Caco-2 (cell line): ENCODE measurements at regions of chr3 and their contacts with region 1.

Region 1: DNA sequence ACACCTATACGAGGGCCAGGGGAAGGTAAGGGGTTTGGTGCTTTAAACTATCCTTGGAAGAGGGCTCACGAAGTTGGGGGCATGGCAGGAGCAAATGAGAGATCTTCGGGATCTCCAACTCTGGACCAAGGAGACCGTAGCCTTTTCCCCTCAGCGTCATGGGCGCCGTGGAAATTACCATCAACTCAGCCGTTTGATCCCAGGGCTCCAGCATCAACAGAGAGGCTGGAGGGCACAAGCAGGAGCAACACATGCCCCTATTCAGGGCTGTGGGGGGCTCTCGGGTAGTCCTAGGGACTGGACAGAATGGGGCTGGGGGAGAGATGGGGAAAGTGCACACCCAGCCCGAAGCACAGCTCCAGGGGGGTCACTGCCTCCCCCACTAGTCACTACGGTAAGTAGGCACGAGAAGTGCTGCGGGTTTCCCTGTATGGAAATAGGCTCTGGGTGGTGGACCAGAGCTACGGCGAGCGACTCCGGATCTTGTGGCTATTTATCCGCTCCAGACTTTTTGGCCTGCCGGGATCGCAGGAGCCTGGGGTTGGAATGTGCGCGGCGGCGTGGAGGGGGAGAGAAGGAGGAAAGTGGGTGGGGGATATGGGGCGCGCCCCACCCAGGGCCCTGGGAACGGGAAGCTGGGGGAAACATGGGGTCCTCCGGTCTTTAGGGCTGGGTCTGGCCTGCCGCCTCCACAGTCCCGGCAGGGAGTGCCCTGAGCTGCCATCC is 539 bp upstream of the LAMB2 start:
- DNase-seq: peak; percentile 86 to 90
- H3K4me3 ChIP-seq: peak overlapping the region; percentile 66
- H3K4me3 Mint-ChIP-seq: peak overlapping the region; percentile 93
- H3K27ac Mint-ChIP-seq: peak overlapping the region; percentile 90
- H3K4me1 ChIP-seq: peaks cover 15% of the 10 kb centered on the region
- H3K4me1 Mint-ChIP-seq: peaks cover 13% of the 10 kb centered on the region
- H3K27me3 ChIP-seq: no peaks in the 10 kb centered on the region
- H3K27me3 Mint-ChIP-seq: no peaks in the 10 kb centered on the region
- CTCF ChIP-seq: no peak

Region 2: DNA sequence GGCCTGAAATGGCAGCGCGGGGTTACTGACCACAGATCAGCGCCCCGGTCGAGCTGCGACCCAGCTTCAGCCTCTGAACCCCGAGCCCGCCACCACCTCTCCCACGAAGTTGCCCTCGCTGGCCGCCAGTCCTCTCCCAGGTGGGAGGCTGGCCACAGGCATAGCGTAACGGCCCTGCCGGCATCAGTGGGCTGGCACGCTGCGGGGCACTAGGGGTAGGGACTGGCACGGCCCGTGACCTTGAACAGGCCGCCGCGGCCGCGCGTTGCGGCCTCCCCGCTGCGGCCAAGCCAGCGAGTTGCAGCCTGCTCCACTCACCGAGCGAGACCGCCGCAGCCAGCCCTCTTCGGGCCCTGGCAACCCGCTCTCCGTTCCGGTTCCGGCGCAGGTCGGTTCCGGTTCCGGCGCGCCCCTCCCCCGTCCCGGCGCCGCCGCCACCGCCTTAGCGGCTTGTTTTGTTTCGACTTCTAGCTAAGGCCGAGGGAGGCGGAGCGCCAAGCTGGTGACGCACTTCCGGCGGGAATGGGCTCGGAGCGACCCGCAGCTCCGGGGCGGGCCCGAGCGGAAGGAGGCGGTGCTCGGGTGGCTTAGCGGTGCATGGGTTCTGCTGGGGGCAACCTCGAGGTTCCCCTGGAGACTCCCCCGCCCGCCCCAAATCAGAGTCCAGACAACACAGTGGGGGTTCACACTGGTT is 12.8 kb before region 1 on chr3 and contains the start of gene USP19:
- CTCF ChIA-PET with region 1: interaction called, 8 read pairs
- POLR2A ChIA-PET with region 1: interaction called, 12 read pairs
- intact Hi-C with region 1: loop called (anchors 1 kb)
- DNase-seq: peak; percentile 89 to 91
- H3K4me3 ChIP-seq: peak within 1 kb of the TSS; percentile 90
- H3K4me3 Mint-ChIP-seq: peak within 1 kb of the TSS; percentile 79
- H3K27ac Mint-ChIP-seq: peak within 1 kb of the TSS; percentile 66
- H3K4me1 ChIP-seq: peaks cover 9% of the 10 kb centered on the region; the same call in 1 of the 2 replicates
- H3K4me1 Mint-ChIP-seq: no peaks in the 10 kb centered on the region
- H3K27me3 ChIP-seq: no peaks in the 10 kb centered on the region
- H3K27me3 Mint-ChIP-seq: no peaks in the 10 kb centered on the region
- CTCF ChIP-seq: no peak
- total RNA-seq, gene USP19: 55.9 and 56.4 TPM in 2 replicates

Region 3: DNA sequence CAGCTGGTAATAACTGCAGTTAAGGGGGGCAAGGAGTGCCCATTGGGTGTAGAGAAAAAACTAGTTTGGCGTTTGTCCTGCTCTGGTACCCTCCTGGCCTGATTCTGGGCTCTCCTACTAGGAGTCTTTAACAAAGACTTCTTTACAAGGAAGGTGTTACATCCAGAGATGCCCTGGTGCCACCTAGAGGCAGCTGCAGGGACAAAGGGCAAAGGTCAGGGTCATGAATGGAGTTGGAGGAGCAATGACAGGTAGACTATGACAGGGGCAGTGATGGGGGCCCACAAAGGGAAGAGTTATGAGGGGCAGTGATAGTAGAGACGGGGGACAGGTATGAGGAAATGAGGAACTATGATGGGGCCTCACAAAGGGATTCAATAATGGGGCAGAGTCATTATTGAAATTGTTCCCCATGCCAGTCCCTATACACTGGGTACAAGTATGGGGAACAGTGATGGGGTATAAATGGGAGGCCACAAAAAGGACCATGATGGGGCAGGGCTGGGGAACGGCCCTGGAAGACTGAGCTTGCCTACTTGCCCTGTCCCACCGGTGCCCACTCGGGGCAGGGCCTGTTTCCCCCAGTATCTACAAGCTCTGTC is 24.8 kb after region 1 on chr3:
- CTCF ChIA-PET with region 1: no interaction called
- POLR2A ChIA-PET with region 1: no interaction called
- intact Hi-C with region 1: loop called (anchors 1 kb)
- DNase-seq: peak; percentile 78 to 79
- H3K4me3 ChIP-seq: no peak overlapping the region
- H3K4me3 Mint-ChIP-seq: no peak overlapping the region
- H3K27ac Mint-ChIP-seq: peak overlapping the region; percentile 4
- H3K4me1 ChIP-seq: no peaks in the 10 kb centered on the region
- H3K4me1 Mint-ChIP-seq: no peaks in the 10 kb centered on the region
- H3K27me3 ChIP-seq: no peaks in the 10 kb centered on the region
- H3K27me3 Mint-ChIP-seq: no peaks in the 10 kb centered on the region
- CTCF ChIP-seq: peak; percentile 58 to 86

Region 4: GRCh38 chr3:49295489-49296058 is 162.2 kb after region 1 on chr3:
- CTCF ChIA-PET with region 1: no interaction called
- POLR2A ChIA-PET with region 1: no interaction called
- intact Hi-C with region 1: no loop called
- DNase-seq: peak in 1 of 2 experiments; percentile 29
- H3K4me3 ChIP-seq: no peak overlapping the region
- H3K4me3 Mint-ChIP-seq: no peak overlapping the region
- H3K27ac Mint-ChIP-seq: no peak overlapping the region
- H3K4me1 ChIP-seq: no peaks in the 10 kb centered on the region
- H3K4me1 Mint-ChIP-seq: no peaks in the 10 kb centered on the region
- H3K27me3 ChIP-seq: no peaks in the 10 kb centered on the region
- H3K27me3 Mint-ChIP-seq: no peaks in the 10 kb centered on the region
- CTCF ChIP-seq: peak; percentile 56 to 59